ENCODE measurements at regions of chr17 and their contacts with region 1.

Region 1: DNA sequence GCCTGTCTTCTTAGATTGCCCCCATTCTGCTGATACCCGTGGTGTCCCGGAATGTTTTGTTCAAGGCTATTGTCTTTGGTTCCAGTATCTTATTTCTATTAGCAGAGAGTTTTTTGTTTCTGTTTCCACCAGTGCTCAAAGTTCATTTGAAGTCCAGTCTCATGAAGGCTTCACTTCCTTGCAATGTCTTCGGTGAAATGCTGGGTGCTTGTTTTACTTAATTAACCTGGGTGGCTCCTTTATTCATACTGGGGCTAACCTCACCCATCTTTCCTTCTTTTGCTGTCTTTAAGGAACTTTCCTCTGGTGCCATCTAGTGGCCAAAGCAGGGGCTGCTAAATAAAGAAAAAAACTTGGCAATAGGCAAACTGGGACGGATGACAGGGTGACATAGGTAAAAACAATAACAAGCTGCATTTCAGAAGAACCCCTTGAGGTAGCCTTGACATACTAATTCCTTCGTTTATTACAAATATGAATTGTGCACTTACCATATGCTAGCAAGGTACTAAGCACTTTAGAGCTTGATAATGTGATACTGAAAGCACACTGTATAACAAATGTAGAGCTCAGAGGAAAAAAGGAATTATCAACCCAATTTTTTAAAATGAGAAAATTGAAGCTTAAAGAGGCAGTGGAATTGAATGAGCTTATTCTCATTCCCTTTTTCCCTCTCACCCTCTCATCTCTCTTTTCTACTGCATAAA is 2.8 kb upstream of the SMIM36 start:
- DNase-seq: peak; percentile 81
- H3K4me3 ChIP-seq: no peak overlapping the region
- H3K27ac ChIP-seq: no peak overlapping the region
- H3K4me1 ChIP-seq: peaks cover 0 to 13% (median 0%) of the 10 kb centered on the region in 4 donors
- H3K27me3 ChIP-seq: no peaks in the 10 kb centered on the region
- CTCF ChIP-seq: peak; percentile 76 to 95 (median 82)
- EP300 ChIP-seq: no peak
- POLR2A ChIP-seq: no peak

Region 2: GRCh38 chr17:54968262-54968987 is 545.6 kb before region 1 on chr17 and contains the starts of genes COX11 and STXBP4:
- intact Hi-C with region 1: loop called (anchors 5 kb)
- DNase-seq: peak; percentile 97
- H3K4me3 ChIP-seq: peak within 1 kb of the TSS; percentile 84 to 95 (median 89)
- H3K27ac ChIP-seq: peak within 1 kb of the TSS; percentile 86 to 94 (median 91)
- H3K4me1 ChIP-seq: peaks cover 0 to 30% (median 26%) of the 10 kb centered on the region in 4 donors
- H3K27me3 ChIP-seq: no peaks in the 10 kb centered on the region
- CTCF ChIP-seq: peak in 2 of 4 experiments; percentile 46 to 55
- EP300 ChIP-seq: peak in 1 of 4 donors; percentile 57
- POLR2A ChIP-seq: peak; percentile 74 to 79
- total RNA-seq, gene COX11: 36.6 to 96.3 (median 55.2) TPM
- total RNA-seq, gene STXBP4: 15.0 to 25.2 (median 21.1) TPM

Region 3: DNA sequence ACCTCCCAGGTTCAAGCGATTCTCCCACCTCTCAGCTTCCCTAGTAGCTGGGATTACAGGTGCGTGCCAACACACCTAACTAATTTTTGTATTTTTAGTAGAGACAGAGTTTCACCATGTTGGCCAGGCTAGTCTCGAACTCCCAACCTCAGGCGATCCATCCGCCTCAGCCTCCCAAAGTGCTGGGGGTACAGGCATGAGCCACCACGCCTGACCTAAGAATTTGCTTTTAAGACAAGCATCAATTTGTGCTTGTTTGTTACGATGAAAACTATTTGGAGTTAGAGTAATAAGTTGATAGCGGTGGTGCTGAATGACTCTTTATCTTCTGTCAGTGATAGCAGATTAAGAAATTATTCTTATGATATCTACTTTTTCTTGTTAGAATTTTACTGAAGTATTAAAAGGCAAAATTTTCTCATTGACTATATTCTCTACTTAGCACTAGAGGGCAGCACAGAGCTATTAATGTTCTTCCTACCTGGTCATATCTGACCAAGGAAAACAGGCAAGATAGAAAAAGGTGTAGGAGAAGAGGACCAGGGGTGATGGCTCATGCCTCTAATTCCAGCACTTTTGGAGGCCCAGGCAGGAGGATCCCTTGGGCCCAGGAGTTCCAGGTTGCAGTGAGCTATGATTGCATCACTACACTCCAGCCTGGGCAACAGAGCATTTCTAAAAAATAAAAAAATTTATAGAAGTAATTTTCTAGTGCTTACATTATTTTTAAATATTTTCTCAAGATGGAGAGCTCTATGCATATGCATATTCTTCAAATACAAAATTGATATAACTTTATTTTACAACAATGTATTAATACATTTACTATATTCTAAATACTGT is 521.0 kb before region 1 on chr17:
- intact Hi-C with region 1: loop called (anchors 5 kb)
- DNase-seq: no peak
- H3K4me3 ChIP-seq: no peak overlapping the region
- H3K27ac ChIP-seq: no peak overlapping the region
- H3K4me1 ChIP-seq: no peaks in the 10 kb centered on the region
- H3K27me3 ChIP-seq: no peaks in the 10 kb centered on the region
- CTCF ChIP-seq: peak in 3 of 4 experiments; percentile 47 to 67 (median 56)
- EP300 ChIP-seq: no peak
- POLR2A ChIP-seq: no peak

Region 4: GRCh38 chr17:55053855-55054254 is 460.2 kb before region 1 on chr17:
- intact Hi-C with region 1: loop called (anchors 10 kb)
- DNase-seq: no peak
- H3K4me3 ChIP-seq: no peak overlapping the region
- H3K27ac ChIP-seq: no peak overlapping the region
- H3K4me1 ChIP-seq: no peaks in the 10 kb centered on the region
- H3K27me3 ChIP-seq: no peaks in the 10 kb centered on the region
- CTCF ChIP-seq: no peak
- EP300 ChIP-seq: no peak
- POLR2A ChIP-seq: no peak

Region 5: GRCh38 chr17:55238179-55238930 is 275.7 kb before region 1 on chr17:
- intact Hi-C with region 1: loop called (anchors 5 kb)
- DNase-seq: peak; percentile 97
- H3K4me3 ChIP-seq: peak overlapping the region; percentile 31 to 55 (median 52)
- H3K27ac ChIP-seq: peak overlapping the region; percentile 82 to 86 (median 85)
- H3K4me1 ChIP-seq: peaks cover 0 to 22% (median 9%) of the 10 kb centered on the region in 4 donors
- H3K27me3 ChIP-seq: no peaks in the 10 kb centered on the region
- CTCF ChIP-seq: no peak
- EP300 ChIP-seq: peak in 1 of 4 donors; percentile 35
- POLR2A ChIP-seq: no peak

Region 6: DNA sequence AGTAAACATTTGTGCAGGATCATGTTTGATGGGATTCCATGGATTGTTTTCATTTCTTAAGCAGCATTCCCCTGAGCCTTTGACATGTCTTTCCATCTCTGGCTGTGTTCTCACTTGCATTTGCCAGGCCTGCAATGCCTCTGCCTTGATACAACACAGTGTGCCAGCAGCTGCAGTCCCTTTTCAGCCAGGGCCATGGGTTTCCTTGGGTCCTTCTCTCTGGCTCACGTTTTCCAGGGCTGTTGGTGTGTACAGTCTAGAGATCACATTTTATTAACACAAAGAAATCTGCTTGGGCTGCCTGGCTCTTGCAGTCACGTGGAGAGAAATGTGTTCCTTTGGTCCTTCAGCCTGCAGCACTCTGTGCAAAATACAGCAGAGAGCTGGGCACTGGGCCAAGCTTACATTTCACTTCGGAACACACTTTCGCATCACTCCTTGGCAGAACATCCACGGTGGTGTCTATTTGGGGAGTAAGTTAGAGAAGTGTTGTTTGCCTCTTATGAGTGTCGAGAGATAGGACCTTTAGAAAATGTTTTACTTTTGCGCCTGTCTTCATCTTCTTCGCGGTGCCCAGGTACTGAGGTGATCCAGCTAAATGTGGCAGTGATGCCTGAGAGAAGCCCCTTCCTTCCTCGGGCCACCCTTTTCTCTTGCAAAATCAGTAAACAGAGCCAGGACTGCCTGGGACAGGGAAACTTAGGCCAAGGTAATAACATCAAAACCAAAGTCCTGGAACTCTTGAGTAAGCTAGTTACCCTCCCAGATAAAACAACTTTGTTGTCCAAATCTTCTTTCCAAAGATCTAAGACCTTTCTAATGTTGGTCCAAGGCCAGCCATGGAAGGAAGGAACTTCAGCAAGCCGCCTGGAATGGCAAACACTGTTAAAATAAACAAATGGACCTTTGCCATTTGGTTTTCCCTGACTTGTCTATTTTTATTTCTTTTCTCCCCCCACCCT is 228.4 kb before region 1 on chr17:
- intact Hi-C with region 1: loop called (anchors 5 kb)
- DNase-seq: peak; percentile 100
- H3K4me3 ChIP-seq: peak overlapping the region in 2 of 4 donors; percentile 2 to 9
- H3K27ac ChIP-seq: peak overlapping the region; percentile 88 to 97 (median 91)
- H3K4me1 ChIP-seq: peaks cover 0 to 89% (median 85%) of the 10 kb centered on the region in 4 donors
- H3K27me3 ChIP-seq: no peaks in the 10 kb centered on the region
- CTCF ChIP-seq: no peak
- EP300 ChIP-seq: peak; percentile 46 to 90 (median 79)
- POLR2A ChIP-seq: no peak

Region 7: GRCh38 chr17:55394357-55395021 is 119.5 kb before region 1 on chr17:
- intact Hi-C with region 1: no loop called
- DNase-seq: no peak
- H3K4me3 ChIP-seq: no peak overlapping the region
- H3K27ac ChIP-seq: peak overlapping the region; percentile 24 to 52 (median 42)
- H3K4me1 ChIP-seq: peaks cover 0 to 19% (median 5%) of the 10 kb centered on the region in 4 donors
- H3K27me3 ChIP-seq: no peaks in the 10 kb centered on the region
- CTCF ChIP-seq: no peak
- EP300 ChIP-seq: no peak
- POLR2A ChIP-seq: no peak

Region 8: DNA sequence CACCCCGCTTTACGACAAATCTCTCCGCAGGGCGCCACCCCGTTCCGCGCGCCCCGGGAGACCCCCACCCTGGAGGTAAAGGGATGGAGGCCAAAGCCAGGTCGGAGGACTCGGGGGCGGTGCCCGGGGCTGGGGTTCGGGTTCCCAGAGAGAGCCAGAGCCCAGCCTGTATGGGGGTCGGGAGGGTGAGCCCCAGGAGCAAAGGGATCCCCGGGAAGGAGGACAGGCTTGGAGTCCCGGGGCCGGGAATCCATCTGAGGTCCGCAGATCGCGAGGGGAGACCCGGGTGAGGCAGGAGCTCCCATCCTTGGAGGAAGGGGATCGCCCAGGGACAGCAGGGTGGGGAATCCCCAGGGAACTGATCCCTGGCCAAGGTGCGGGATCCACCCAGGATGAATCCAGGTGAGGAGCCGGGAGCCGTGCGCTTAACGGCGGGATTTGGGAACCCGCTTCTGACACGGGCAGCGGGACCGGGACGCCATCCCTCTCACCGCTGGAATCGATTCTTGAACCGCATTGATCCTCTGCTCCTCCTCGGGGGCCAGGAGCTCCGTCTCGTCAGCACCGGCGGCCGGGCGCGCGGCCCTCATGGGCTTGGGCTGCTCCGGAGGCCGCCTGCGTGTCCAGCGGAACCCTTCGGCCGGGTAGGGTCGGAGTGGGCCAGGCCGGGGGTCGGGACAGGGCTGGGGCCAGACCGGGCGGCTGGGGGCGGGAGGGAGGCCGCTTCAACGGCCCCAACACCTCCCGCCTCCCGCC is 92.7 kb before region 1 on chr17 and contains the start of gene MMD:
- intact Hi-C with region 1: loop called (anchors 5 kb)
- DNase-seq: peak; percentile 78
- H3K4me3 ChIP-seq: peak within 1 kb of the TSS; percentile 71 to 97 (median 96)
- H3K27ac ChIP-seq: peak within 1 kb of the TSS; percentile 90 to 97 (median 94)
- H3K4me1 ChIP-seq: peaks cover 0 to 39% (median 27%) of the 10 kb centered on the region in 4 donors
- H3K27me3 ChIP-seq: no peaks in the 10 kb centered on the region
- CTCF ChIP-seq: no peak
- EP300 ChIP-seq: peak in 1 of 4 donors; percentile 3
- POLR2A ChIP-seq: peak; percentile 30 to 42
- total RNA-seq, gene MMD: 26.9 to 51.3 (median 34.6) TPM

Region 9: GRCh38 chr17:55478986-55479385 is 35.1 kb before region 1 on chr17:
- intact Hi-C with region 1: no loop called
- DNase-seq: no peak
- H3K4me3 ChIP-seq: no peak overlapping the region
- H3K27ac ChIP-seq: no peak overlapping the region
- H3K4me1 ChIP-seq: no peaks in the 10 kb centered on the region
- H3K27me3 ChIP-seq: no peaks in the 10 kb centered on the region
- CTCF ChIP-seq: no peak
- EP300 ChIP-seq: no peak
- POLR2A ChIP-seq: no peak

Region 10: DNA sequence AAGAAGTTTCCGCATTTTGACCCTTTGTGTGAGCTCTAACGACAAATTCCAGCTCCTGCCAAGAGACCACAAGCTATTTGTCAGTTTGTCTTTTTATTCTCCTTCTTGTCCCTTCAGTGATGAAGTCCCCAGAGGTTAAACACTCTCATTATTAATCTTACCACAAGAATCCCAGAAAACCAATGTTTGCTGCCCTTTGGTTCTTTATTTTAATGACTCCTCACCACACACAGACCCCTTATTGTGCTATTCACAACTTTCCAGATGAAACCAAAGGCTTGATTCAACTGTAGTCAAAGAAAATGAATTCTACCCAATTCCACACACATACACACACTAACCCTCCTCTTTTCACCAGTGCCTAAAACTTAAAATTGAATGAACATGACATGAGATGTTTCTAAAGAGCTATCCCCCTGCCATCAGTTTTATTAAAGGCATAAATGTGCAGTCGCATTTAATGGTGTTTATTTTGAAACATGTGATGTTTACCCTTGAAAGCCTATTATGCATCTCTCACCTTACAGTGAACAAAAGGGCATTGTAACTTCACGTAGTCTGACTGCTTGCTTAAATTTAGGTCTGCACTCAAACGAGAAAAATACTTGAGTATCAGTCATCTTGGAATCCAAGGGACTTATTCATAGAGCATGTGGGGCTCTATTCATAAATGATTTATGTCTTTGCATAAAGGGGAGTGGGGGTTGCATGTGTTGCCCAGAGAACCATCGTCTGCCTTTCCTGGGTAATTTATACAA is 280.9 kb after region 1 on chr17:
- intact Hi-C with region 1: no loop called
- DNase-seq: no peak
- H3K4me3 ChIP-seq: no peak overlapping the region
- H3K27ac ChIP-seq: no peak overlapping the region
- H3K4me1 ChIP-seq: no peaks in the 10 kb centered on the region
- H3K27me3 ChIP-seq: no peaks in the 10 kb centered on the region
- CTCF ChIP-seq: no peak
- EP300 ChIP-seq: no peak
- POLR2A ChIP-seq: no peak

Measured in sigmoid colon (tissue), 7 donors.